HEK293 (cell line): ENCODE measurements at regions of chr1 and their contacts with region 1.

Region 1: GRCh38 chr1:41333146-41333784 is 28.0 kb upstream of the FOXO6 start:
- H3K4me3 ChIP-seq: no peak overlapping the region
- H3K27ac ChIP-seq: no peak overlapping the region
- H3K4me1 ChIP-seq: no peaks in the 10 kb centered on the region
- CTCF ChIP-seq: no peak

Region 2: GRCh38 chr1:41322835-41323627 is 10.2 kb before region 1 on chr1:
- CTCF ChIA-PET with region 1: interaction called, 11 read pairs
- POLR2A ChIA-PET with region 1: no interaction called
- H3K4me3 ChIP-seq: no peak overlapping the region
- H3K27ac ChIP-seq: no peak overlapping the region
- H3K4me1 ChIP-seq: no peaks in the 10 kb centered on the region
- CTCF ChIP-seq: peak; percentile 70